ENCODE measurements at regions of chr11 and their contacts with region 1.

Region 1: GRCh38 chr11:35822815-35823495 is 120.9 kb upstream of the LDLRAD3 start:
- DNase-seq: no peak
- H3K4me3 ChIP-seq: no peak overlapping the region
- H3K27ac ChIP-seq: no peak overlapping the region
- H3K4me1 ChIP-seq: no peaks in the 10 kb centered on the region
- H3K27me3 ChIP-seq: no peaks in the 10 kb centered on the region
- CTCF ChIP-seq: no peak
- POLR2A ChIP-seq: no peak

Region 2: DNA sequence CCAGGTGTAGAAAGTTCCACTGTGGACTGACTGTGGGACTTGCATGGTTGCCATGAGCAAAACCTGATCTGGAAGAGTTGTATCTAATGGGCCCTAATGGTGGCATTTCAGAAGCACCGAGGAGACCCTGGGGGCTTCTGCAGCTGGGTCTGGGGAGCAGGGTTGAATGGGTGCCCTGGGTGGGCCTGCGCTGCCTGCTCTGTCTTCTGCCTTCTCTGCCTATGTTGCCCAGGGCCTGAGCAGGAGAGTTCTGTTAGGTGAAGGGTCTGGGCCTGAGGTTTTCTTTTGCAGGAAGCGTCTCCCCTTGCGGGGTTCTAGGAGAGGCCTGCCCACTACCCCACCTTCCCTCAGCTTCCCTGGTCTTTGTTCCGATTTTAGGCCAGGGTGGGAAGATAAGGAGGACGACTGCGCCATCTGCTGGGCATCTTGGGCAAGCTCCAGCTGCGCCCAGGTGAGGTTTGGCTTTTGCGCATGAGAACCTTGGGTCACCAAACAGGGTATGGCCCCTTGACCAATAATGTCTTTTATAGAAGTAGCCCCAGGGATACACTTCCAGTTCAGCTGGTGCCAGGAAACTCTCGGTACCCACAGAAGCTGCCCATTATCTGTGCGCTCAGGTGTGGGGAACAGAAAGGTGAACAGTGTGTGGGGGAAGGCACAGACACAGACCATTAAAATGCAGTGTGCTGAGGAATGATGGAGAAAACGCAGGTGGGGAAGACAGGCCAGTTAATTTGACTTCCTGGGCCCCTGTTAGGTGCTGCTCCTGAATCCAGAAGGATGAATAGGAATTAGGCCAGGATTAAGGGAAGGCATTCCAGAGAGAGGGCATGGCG is 443.1 kb after region 1 on chr11:
- intact Hi-C with region 1: loop called (anchors 5 kb)
- DNase-seq: peak; percentile 26
- H3K4me3 ChIP-seq: no peak overlapping the region
- H3K27ac ChIP-seq: no peak overlapping the region
- H3K4me1 ChIP-seq: no peaks in the 10 kb centered on the region
- H3K27me3 ChIP-seq: no peaks in the 10 kb centered on the region
- CTCF ChIP-seq: peak; percentile 75 to 82 (median 80)
- POLR2A ChIP-seq: no peak